ENCODE measurements at regions of chrX and their contacts with region 1.

Region 1: GRCh38 chrX:74536152-74536831 is 78.1 kb downstream of the RLIM start:
- DNase-seq: peak; percentile 75
- CTCF ChIP-seq: no peak

Region 2: GRCh38 chrX:74382613-74383012 is 153.7 kb before region 1 on chrX:
- in situ Hi-C with region 1: loop called (anchors 25 kb)
- DNase-seq: peak; percentile 54
- CTCF ChIP-seq: peak; percentile 74

Region 3: GRCh38 chrX:75096331-75096730 is 560.0 kb after region 1 on chrX:
- in situ Hi-C with region 1: no loop called
- DNase-seq: no peak
- CTCF ChIP-seq: no peak

Measured in GM13976 (cell line).